ENCODE measurements at regions of chr11 and their contacts with region 1.

Region 1: GRCh38 chr11:34068111-34068510 is 16.6 kb downstream of the CAPRIN1 start:
- DNase-seq: no peak
- CTCF ChIP-seq: no peak

Region 2: DNA sequence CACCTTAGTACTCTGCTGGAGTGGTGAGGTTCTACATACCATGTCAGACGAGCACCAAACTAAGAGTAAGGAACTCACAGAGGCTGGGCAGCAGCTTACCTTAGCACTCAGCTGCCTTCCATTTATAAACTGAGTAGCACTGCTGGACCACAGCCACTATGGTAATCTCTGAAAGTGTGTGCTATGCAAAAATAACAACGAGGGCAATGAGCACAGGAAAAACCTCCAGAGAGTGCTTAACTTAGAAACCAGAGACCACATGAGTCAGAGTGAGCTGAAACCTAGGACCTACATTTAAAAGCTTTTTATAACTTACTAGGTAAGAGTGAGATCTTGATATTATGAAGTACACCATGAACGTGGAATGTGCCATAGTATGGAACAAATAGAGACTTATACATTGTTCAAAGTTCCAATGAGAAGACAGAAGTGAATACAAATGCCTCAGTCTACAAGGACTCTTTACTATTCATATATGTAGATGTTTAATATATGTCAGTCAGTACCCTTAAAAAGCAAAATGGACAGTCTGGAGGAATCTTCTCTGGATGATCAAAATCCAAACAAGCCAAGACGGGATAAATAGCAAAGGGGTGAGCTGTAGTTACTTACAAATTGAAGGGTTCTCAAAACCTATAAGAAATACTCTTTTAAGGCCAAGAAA is 314.7 kb before region 1 on chr11:
- CTCF ChIA-PET with region 1: no interaction called
- POLR2A ChIA-PET with region 1: no interaction called
- DNase-seq: peak; percentile 39
- CTCF ChIP-seq: no peak

Region 3: GRCh38 chr11:33965032-33965431 is 103.1 kb before region 1 on chr11:
- CTCF ChIA-PET with region 1: no interaction called
- POLR2A ChIA-PET with region 1: no interaction called
- DNase-seq: no peak
- CTCF ChIP-seq: no peak

Region 4: DNA sequence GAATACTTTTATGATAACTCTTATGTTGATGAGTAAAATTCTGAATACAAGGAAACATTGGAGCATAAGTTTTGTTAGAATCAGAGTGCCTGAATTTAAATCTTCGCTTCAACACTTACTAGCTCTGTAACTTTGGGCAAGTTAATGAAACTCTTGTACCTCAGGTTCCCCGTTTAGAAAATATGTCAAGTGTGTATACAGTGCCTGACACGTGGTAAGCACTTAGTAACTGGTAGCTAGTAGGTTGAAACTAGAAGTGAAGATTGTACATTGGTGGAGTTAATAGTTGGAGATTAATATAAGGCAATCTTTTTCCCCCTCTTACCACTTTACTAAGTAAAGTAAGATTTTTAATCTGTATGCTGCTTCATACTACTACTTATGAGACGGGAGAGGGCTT is 12.5 kb after region 1 on chr11:
- CTCF ChIA-PET with region 1: interaction called, 28 read pairs
- POLR2A ChIA-PET with region 1: no interaction called
- DNase-seq: no peak
- CTCF ChIP-seq: no peak